ENCODE measurements at regions of chr3 and their contacts with region 1.

Region 1: GRCh38 chr3:50205414-50206276 is 574 bp downstream of the SLC38A3 start:
- DNase-seq: peak; percentile 29
- H3K4me3 ChIP-seq: peak overlapping the region; percentile 34; the same call in 1 of the 2 replicates
- H3K27ac ChIP-seq: no peak overlapping the region
- H3K4me1 ChIP-seq: no peaks in the 10 kb centered on the region; the same call in 1 of the 2 replicates
- H3K27me3 ChIP-seq: peaks cover 14% of the 10 kb centered on the region

Region 2: GRCh38 chr3:50542177-50543034 is 336.8 kb after region 1 on chr3:
- in situ Hi-C with region 1: loop called (anchors 25 kb)
- DNase-seq: peak; percentile 66
- H3K4me3 ChIP-seq: no peak overlapping the region
- H3K27ac ChIP-seq: no peak overlapping the region
- H3K4me1 ChIP-seq: no peaks in the 10 kb centered on the region
- H3K27me3 ChIP-seq: peaks cover 24% of the 10 kb centered on the region

Measured in GM23248 (cell line).